HEK293 (cell line): ENCODE measurements at regions of chr5 and their contacts with region 1.

Region 1: DNA sequence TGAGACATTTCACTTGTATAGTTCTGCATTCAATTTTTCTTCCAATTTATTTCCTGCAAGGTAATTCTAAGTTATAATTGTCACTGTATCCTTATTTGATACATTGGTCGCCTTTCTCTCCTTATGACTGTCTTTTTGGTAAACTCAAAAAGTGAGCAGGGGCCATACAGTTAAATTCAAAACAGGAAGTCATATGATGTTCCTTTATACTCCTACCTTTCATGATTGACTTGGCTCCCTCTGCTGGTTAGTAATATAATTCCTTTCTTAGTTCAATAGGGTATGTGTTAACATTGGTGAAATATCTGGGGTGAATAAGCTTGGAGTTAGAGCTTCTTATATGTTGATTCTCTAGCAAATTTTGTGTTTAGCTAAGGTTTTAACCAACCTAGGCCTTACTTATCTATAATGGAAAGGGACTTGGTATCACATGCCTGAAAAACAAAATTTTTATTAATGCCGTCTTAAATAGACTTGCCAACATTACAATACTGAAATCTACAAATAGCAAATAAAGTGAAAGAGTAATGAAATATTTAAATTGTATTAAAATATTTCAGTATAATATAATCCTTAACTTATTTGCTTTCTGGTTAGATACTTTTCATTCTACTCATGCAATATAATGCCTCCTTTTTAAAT is 6.0 kb upstream of the NIPBL start:
- H3K4me3 ChIP-seq: no peak overlapping the region
- H3K27ac ChIP-seq: no peak overlapping the region
- H3K4me1 ChIP-seq: peaks cover 8% of the 10 kb centered on the region; the same call in 1 of the 2 replicates
- CTCF ChIP-seq: peak; percentile 39; the same call in 1 of the 2 replicates

Region 2: DNA sequence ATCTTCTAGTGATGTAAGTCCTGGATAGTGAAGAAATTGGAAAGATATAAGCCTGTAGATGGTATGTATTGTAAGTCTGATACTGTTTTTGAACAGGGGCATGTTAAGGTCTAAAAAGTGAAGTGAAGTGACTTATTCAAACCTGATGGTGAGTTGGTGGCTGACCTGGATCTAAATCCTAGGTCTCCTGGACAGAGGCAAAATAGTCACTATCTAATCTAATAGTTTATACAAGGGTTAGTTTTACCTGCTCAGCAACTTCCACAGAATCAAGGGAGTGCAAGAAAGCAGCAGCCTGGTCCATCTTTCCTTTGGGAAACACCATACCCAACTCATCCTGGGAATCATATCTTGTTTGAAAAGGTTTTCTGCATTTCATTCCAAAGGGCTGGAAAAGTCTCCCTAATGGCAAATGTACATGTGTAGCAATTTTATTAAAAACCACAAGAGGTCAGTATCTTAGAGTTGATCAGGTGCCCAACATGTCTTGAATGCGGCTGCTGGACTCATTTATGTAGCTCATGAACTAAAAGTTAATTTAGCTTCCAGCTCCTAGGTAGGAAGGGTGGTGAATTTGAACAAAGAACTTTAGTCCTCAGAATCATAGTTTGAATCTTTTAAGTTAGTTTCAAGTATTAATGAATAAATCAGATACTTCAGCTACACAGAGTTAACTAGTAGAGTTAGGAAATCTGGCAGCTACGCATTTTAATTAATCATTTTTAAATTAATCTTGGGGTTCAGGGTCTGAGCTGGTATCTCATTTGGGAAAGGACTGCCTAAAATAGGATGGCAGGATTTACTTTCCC is 692.6 kb before region 1 on chr5:
- CTCF ChIA-PET with region 1: no interaction called
- POLR2A ChIA-PET with region 1: no interaction called
- H3K4me3 ChIP-seq: no peak overlapping the region
- H3K27ac ChIP-seq: no peak overlapping the region
- H3K4me1 ChIP-seq: no peaks in the 10 kb centered on the region
- CTCF ChIP-seq: peak; percentile 39; the same call in 1 of the 2 replicates

Region 3: DNA sequence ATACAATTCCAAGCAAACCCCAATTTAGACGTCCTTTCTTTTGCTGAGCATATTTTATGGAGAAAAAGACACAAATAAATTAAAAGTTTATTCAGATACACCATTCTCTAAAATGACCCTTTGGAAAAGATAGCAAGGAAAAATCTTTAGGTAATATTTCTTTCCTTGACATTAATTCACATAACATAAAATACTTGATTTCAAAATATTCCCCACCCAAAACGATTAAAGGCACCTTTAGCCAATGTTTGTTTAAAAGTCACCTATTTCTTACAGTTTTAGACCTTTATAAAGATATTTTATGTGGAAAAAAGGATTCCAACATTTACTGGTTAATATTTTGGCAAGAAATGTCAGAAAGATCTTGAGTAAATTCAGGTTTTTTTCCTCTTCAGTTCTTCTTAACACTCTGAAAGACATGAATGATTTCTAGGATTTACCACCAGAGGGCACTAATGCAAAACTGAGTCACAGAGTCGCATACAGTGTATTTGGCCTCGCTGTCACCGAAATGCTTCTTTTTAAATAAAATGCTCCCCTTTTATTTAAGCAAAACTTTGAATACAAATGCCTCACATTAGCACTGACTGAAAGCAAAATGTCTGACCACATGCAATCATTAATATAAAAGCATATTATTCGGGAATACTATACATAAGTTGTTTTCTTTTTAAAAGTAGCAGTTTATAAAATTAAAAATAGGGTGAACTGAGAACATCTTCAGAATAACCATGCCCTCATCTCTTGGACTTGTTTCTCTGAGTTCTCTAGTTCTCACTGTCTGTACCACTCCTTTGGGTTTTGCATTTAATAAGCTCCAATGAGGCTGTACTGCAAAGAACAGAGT is 141.6 kb before region 1 on chr5:
- CTCF ChIA-PET with region 1: interaction called, 19 read pairs
- POLR2A ChIA-PET with region 1: no interaction called
- H3K4me3 ChIP-seq: no peak overlapping the region
- H3K27ac ChIP-seq: no peak overlapping the region
- H3K4me1 ChIP-seq: no peaks in the 10 kb centered on the region
- CTCF ChIP-seq: no peak

Region 4: DNA sequence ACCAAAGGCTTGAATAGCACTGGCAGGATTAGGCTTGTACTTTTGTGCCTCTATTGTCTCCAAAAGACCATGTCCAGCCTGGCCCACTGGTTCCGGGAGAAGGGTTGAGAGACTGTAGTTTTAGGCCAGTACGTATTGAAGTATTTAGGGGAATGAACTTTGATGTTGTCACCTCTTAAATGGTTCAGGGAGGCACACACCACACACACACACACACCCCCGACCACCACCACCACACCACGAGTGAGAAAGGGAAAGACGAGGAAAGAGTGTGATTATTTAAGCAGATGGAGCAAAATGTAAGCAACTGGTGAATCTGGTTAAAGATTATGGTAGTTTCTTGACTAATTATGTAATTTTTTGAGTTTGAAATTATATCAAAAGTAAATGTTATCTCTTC is 67.6 kb after region 1 on chr5:
- CTCF ChIA-PET with region 1: no interaction called
- POLR2A ChIA-PET with region 1: no interaction called
- H3K4me3 ChIP-seq: no peak overlapping the region
- H3K27ac ChIP-seq: no peak overlapping the region
- H3K4me1 ChIP-seq: peaks cover 29% of the 10 kb centered on the region
- CTCF ChIP-seq: no peak

Region 5: GRCh38 chr5:36978196-36978595 is 107.7 kb after region 1 on chr5:
- CTCF ChIA-PET with region 1: interaction called, 12 read pairs
- POLR2A ChIA-PET with region 1: no interaction called
- H3K4me3 ChIP-seq: no peak overlapping the region
- H3K27ac ChIP-seq: no peak overlapping the region
- H3K4me1 ChIP-seq: peaks cover 15% of the 10 kb centered on the region
- CTCF ChIP-seq: no peak